AG04449 (cell line): ENCODE measurements at regions of chrX and their contacts with region 1.

Region 1: DNA sequence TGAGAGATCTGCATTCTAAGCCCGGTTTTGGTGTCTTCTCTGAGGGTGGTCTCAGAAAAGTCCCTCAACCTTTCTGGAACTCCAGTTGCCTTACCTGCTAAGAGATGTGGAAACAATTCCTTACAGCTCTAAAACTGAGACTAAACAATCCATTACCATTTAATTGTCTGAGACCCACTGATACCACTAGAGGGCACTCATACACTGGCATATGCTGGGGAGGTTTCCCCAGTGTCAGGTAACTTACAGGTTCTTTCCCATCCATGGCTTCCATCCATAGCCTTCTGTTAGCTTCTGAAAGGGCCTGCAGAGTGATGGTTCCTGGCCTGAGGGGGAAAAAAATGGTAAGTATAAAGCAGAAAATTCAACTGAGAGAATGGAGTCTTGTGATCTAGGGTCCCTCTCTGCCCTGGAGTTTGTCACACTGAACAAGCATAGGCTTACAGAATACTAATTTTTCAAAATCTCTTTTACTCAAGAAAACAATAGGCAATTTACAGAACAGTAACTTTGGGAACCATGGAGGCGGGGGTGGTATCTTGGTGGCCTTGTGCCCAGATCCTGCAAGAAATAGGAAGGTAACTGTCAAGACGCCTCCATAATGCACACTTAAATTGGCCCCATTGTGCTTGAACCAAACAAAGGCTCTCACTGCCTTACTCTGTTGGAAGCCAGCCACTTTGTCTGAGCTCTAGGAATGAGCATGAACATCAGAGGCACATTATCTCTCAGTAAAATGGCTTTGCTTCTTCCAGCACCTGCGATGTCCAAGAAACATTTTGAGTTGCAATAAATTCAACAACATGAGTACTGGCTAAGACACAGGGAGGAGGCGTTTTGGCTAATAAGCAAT is 236.1 kb downstream of the OPHN1 start:
- DNase-seq: no peak
- H3K4me3 ChIP-seq: no peak overlapping the region
- CTCF ChIP-seq: peak; percentile 34

Region 2: DNA sequence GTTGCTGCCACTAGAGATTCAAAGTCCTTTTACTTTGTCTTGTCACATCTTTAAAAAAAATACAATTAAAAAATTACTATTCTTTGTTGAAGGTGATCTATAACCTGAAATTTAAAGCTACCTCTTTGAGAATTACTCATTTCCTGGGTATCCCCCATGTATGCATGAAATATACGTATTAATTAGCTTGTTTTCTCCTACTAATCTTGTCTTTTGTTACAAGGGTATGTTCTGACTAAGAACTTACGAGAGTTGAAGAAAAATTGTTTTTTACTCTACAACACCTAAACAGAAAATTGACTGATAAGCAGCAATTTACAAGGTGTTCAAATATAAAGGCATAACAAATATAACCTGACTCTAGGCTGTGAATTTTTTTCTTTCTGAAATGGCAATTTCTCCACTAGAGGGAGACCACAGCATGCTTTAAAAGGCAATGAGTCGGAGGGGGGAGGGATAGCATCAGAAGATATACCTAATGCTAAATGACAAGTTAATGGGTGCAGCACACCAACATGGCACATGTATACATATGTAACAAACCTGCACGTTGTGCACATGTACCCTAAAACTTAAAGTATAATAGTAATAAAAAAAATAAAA is 13.5 kb before region 1 on chrX:
- CTCF ChIA-PET with region 1: interaction called, 18 read pairs
- POLR2A ChIA-PET with region 1: no interaction called
- DNase-seq: no peak
- H3K4me3 ChIP-seq: no peak overlapping the region
- CTCF ChIP-seq: peak; percentile 37

Region 3: GRCh38 chrX:68462653-68463052 is 265.5 kb after region 1 on chrX:
- CTCF ChIA-PET with region 1: interaction called, 14 read pairs
- POLR2A ChIA-PET with region 1: no interaction called
- DNase-seq: no peak
- H3K4me3 ChIP-seq: no peak overlapping the region
- CTCF ChIP-seq: peak; percentile 34

Region 4: GRCh38 chrX:68490599-68490998 is 293.4 kb after region 1 on chrX:
- CTCF ChIA-PET with region 1: interaction called, 20 read pairs
- POLR2A ChIA-PET with region 1: no interaction called
- DNase-seq: no peak
- H3K4me3 ChIP-seq: no peak overlapping the region
- CTCF ChIP-seq: peak; percentile 30

Region 5: GRCh38 chrX:68710870-68711576 is 513.9 kb after region 1 on chrX:
- CTCF ChIA-PET with region 1: interaction called, 14 read pairs
- POLR2A ChIA-PET with region 1: no interaction called
- DNase-seq: no peak
- H3K4me3 ChIP-seq: no peak overlapping the region
- CTCF ChIP-seq: peak; percentile 64